Naive thymus-derived CD4-positive, alpha-beta T cell (primary cell): ENCODE measurements at regions of chr19 and their contacts with region 1.

Region 1: DNA sequence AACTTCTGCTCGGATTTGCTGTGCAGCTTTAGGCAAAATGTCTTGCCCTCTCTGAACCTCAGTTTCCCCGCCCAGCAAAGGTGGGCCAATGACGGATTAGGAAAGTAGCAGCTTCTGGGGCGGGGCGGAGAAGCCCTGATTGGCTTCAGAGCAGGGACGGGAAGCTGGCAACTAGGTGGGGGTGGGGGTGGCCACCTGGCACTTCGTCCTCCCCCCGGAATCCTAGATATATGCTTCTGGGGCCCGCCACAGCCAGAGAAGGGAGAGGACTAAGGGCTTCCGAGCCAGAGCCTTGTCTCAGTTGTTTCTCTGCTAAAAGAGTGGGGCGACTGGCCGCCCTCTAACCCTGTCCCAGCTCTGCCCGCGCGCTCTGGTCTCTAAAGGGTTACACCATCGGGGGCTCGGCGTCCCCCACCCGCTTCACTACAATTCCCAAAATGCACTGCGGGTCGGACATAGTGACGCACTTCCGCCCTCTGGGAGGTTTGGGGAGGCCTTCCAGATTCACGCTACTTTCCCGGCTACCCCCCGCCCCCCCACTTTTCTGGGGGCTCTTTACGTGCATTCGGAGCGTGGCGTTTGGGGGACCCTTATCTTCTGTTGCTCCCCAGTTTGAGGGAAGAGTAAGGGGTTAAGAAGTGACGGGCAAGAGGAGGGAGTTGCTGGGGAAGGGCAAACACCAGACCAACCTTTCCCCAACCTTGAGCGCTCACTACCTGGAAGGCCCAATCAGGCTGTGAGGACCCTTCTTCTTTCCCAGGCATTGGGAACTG is 672 bp upstream of the IRF2BP1 start:
- DNase-seq: peak; percentile 76 to 93 (median 88)
- ATAC-seq: peak; percentile 85
- H3K4me3 ChIP-seq: peak overlapping the region; percentile 99
- H3K4me3 Mint-ChIP-seq: peak overlapping the region; percentile 93 to 99 (median 97)
- H3K27ac ChIP-seq: peak overlapping the region; percentile 86
- H3K27ac Mint-ChIP-seq: peak overlapping the region; percentile 92 to 99 (median 97)
- H3K4me1 ChIP-seq: peaks cover 15 to 34% of the 10 kb centered on the region in 2 donors
- H3K4me1 Mint-ChIP-seq: peaks cover 10 to 32% (median 19%) of the 10 kb centered on the region in 7 donors
- H3K27me3 ChIP-seq: no peaks in the 10 kb centered on the region
- H3K27me3 Mint-ChIP-seq: no peaks in the 10 kb centered on the region

Region 2: GRCh38 chr19:45092747-45093678 is 793.6 kb before region 1 on chr19 and contains the start of gene PPP1R37:
- CTCF ChIA-PET with region 1: no interaction called
- POLR2A ChIA-PET with region 1: no interaction called
- intact Hi-C with region 1: loop called in 1 of 2 experiments (anchors 5 kb)
- DNase-seq: peak; percentile 81 to 97 (median 92)
- ATAC-seq: peak; percentile 85
- H3K4me3 ChIP-seq: peak within 1 kb of the TSS; percentile 75
- H3K4me3 Mint-ChIP-seq: peak within 1 kb of the TSS; percentile 87 to 99 (median 96)
- H3K27ac ChIP-seq: peak within 1 kb of the TSS; percentile 90
- H3K27ac Mint-ChIP-seq: peak within 1 kb of the TSS; percentile 96 to 100 (median 98)
- H3K4me1 ChIP-seq: peaks cover 33 to 46% of the 10 kb centered on the region in 2 donors
- H3K4me1 Mint-ChIP-seq: peaks cover 56 to 81% (median 60%) of the 10 kb centered on the region in 7 donors
- H3K27me3 ChIP-seq: no peaks in the 10 kb centered on the region
- H3K27me3 Mint-ChIP-seq: no peaks in the 10 kb centered on the region
- total RNA-seq, gene PPP1R37: 20.0 to 28.3 (median 21.9) TPM

Region 3: DNA sequence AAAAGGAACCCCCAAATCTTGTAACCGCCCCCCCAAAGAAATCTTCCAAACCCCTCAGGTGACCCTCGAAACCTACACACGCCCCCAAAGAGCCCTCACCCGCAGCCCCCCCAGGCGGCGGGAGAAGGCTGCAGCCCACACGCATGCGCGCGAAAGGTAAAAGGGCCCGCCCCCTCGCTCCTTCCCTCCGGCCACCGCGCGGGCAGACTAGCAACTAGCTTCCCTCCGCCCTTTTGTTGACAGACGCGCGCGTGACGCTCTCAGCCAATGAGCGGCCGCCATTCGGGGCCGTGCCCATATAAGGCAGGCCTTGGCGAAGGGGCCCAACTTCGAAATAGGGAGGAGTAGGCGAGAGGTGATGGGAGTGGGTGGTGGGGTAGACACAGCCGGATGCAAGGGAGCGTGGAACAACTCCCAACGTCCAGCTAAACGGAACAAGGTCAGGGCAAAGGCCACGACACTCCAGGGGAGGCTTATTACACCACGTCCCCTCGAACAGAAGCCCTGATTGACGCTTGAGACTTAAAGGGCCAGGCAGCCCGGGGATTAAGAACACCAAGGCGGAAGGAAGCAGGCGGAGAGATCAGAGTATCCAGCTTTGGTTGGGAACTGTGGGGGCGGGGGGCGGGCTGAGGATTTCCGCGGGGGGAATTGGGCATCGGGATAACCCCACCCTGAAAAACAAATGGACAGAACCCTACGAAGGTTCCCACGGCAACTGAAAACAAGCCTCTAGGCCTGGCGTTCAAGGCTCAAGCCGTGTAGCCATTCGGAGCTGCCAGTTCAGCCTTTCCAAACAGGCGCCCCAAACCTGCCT is 169.2 kb before region 1 on chr19:
- CTCF ChIA-PET with region 1: no interaction called
- POLR2A ChIA-PET with region 1: interaction called, 3 read pairs
- intact Hi-C with region 1: loop called (anchors 1 kb)
- DNase-seq: peak; percentile 92 to 99 (median 98)
- ATAC-seq: peak; percentile 98
- H3K4me3 ChIP-seq: peak overlapping the region; percentile 80
- H3K4me3 Mint-ChIP-seq: peak overlapping the region; percentile 89 to 99 (median 95)
- H3K27ac ChIP-seq: peak overlapping the region; percentile 89
- H3K27ac Mint-ChIP-seq: peak overlapping the region; percentile 88 to 97 (median 96)
- H3K4me1 ChIP-seq: peaks cover 17 to 26% of the 10 kb centered on the region in 2 donors
- H3K4me1 Mint-ChIP-seq: peaks cover 26 to 55% (median 38%) of the 10 kb centered on the region in 7 donors
- H3K27me3 ChIP-seq: no peaks in the 10 kb centered on the region
- H3K27me3 Mint-ChIP-seq: no peaks in the 10 kb centered on the region

Region 4: DNA sequence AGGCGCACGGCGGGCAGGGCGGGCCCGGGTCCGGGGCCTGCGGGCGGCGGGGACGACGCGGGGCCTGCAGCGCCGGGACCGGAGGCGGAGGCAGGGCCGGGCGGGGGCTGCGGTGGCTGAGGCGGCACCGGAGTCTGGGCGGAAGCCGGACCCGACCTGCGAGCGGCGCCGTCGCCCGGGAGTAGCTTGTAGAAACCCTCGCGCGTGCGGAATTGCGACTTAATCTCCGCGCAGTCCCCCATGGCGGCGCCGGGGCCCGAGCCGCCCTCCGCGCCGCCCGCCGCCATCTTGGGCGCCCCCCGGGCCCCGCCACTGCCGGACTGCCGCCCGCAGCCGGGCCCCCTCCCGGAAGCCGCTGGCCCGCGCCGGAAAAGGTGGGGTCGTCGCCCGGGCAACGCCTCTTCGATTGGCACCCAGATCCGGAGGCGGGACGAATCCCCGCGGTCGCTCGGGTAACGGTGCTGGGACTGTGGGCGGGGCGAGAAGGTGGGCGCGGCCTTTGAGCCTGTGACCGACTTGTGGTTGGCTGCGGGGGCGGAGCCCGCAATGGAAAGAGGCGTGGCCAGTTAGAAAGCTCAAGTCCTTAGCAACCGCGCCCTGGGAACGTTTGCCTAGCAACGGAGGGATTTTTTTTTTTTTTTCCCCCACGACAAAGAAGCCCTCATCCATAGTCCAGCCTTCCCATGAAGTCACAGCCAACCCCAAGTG is 94.0 kb before region 1 on chr19 and contains the start of gene DMWD:
- CTCF ChIA-PET with region 1: no interaction called
- POLR2A ChIA-PET with region 1: no interaction called
- intact Hi-C with region 1: loop called (anchors 1 kb)
- DNase-seq: peak; percentile 95 to 99 (median 98)
- ATAC-seq: peak; percentile 98
- H3K4me3 ChIP-seq: peak within 1 kb of the TSS; percentile 61
- H3K4me3 Mint-ChIP-seq: peak within 1 kb of the TSS; percentile 84 to 93 (median 88)
- H3K27ac ChIP-seq: peak within 1 kb of the TSS; percentile 15
- H3K27ac Mint-ChIP-seq: peak within 1 kb of the TSS; percentile 45 to 93 (median 85)
- H3K4me1 ChIP-seq: peaks cover 25 to 28% of the 10 kb centered on the region in 2 donors
- H3K4me1 Mint-ChIP-seq: peaks cover 31 to 44% (median 41%) of the 10 kb centered on the region in 7 donors
- H3K27me3 ChIP-seq: peaks cover 0 to 8% of the 10 kb centered on the region in 2 donors
- H3K27me3 Mint-ChIP-seq: peaks cover 6 to 76% (median 37%) of the 10 kb centered on the region in 5 donors
- total RNA-seq, gene DMWD: 18.7 to 43.2 (median 35.4) TPM

Region 5: GRCh38 chr19:45902651-45903625 is 16.3 kb after region 1 on chr19:
- CTCF ChIA-PET with region 1: interaction called, 9 read pairs
- POLR2A ChIA-PET with region 1: interaction called, 42 read pairs
- intact Hi-C with region 1: loop called (anchors 1 kb)
- DNase-seq: peak; percentile 96 to 100 (median 99)
- ATAC-seq: peak; percentile 93
- H3K4me3 ChIP-seq: peak overlapping the region; percentile 93
- H3K4me3 Mint-ChIP-seq: peak overlapping the region; percentile 93 to 98 (median 96)
- H3K27ac ChIP-seq: peak overlapping the region; percentile 78
- H3K27ac Mint-ChIP-seq: peak overlapping the region; percentile 71 to 93 (median 87)
- H3K4me1 ChIP-seq: peaks cover 0 to 5% of the 10 kb centered on the region in 2 donors
- H3K4me1 Mint-ChIP-seq: peaks cover 10 to 27% (median 17%) of the 10 kb centered on the region in 7 donors
- H3K27me3 ChIP-seq: no peaks in the 10 kb centered on the region
- H3K27me3 Mint-ChIP-seq: peaks cover 0 to 17% (median 0%) of the 10 kb centered on the region in 5 donors

Region 6: DNA sequence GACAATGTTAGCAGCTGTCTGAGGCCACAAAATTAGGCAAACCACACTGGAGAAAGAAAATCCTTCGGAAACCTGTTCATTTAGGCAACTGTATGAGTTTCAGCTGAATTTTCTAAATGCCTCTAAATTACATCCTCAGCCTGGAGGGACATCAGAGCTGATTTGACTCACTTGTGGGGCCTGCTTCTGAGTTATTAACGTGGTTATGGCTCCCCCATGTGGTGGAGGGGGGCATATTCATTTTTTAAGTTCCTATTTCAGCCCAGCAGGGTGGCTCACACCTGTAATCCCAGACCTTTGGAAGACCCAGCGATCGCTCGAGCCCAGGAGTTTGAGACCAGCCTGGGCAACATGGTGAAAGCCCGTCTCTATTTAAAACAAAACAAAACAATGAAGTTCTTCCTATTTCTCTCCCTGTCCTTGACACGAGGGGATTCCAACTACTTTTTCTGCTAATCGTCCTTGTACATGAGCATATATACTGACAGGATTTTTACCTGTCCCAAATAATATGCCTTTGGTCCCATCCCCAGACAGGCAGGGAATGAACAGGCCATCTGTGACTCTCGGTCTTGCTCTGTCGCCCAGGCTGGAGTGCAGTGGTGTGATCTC is 378.7 kb after region 1 on chr19:
- CTCF ChIA-PET with region 1: no interaction called
- POLR2A ChIA-PET with region 1: no interaction called
- intact Hi-C with region 1: loop called in 1 of 2 experiments (anchors 10 kb)
- DNase-seq: peak; percentile 40 to 72 (median 63)
- ATAC-seq: peak; percentile 84
- H3K4me3 ChIP-seq: no peak overlapping the region
- H3K4me3 Mint-ChIP-seq: no peak overlapping the region
- H3K27ac ChIP-seq: no peak overlapping the region
- H3K27ac Mint-ChIP-seq: peak overlapping the region in 1 of 9 donors; percentile 13
- H3K4me1 ChIP-seq: peaks cover 0 to 11% of the 10 kb centered on the region in 2 donors
- H3K4me1 Mint-ChIP-seq: peaks cover 4 to 12% (median 7%) of the 10 kb centered on the region in 7 donors
- H3K27me3 ChIP-seq: peaks cover 0 to 2% of the 10 kb centered on the region in 2 donors
- H3K27me3 Mint-ChIP-seq: peaks cover 36 to 60% (median 38%) of the 10 kb centered on the region in 5 donors

Region 7: DNA sequence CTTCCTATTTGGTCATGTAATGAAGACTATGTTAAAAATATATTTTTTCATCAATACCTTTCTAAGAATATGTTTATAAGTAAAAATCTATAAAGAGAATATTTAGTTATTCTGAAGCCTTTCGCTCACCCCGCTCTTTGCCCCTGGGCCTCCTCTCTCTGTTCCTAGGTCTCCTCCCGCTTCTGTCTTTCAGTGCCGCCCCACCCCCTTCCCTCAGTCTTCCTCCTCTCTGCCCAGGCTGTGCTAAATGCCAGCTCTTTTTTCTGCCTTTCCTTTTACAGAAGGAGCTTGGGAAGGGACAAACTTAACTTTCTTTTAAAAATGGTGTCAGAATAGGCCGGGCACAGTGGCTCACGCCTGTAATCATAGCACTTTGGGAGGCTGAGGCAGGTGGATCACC is 433.0 kb after region 1 on chr19:
- CTCF ChIA-PET with region 1: no interaction called
- POLR2A ChIA-PET with region 1: no interaction called
- intact Hi-C with region 1: no loop called
- DNase-seq: no peak
- ATAC-seq: no peak
- H3K4me3 ChIP-seq: no peak overlapping the region
- H3K4me3 Mint-ChIP-seq: no peak overlapping the region
- H3K27ac ChIP-seq: no peak overlapping the region
- H3K27ac Mint-ChIP-seq: no peak overlapping the region
- H3K4me1 ChIP-seq: no peaks in the 10 kb centered on the region
- H3K4me1 Mint-ChIP-seq: no peaks in the 10 kb centered on the region
- H3K27me3 ChIP-seq: no peaks in the 10 kb centered on the region
- H3K27me3 Mint-ChIP-seq: peaks cover 0 to 3% (median 0%) of the 10 kb centered on the region in 5 donors